Caco-2 (cell line): ENCODE measurements at regions of chr22 and their contacts with region 1.

Region 1: GRCh38 chr22:38923463-38924346 is 33.7 kb upstream of the APOBEC3A start:
- DNase-seq: peak; percentile 92 to 95
- H3K4me3 ChIP-seq: peak overlapping the region; percentile 3
- H3K4me3 Mint-ChIP-seq: peak overlapping the region; percentile 66
- H3K27ac Mint-ChIP-seq: peak overlapping the region; percentile 76
- H3K4me1 ChIP-seq: peaks cover 55% of the 10 kb centered on the region
- H3K4me1 Mint-ChIP-seq: peaks cover 13% of the 10 kb centered on the region
- H3K27me3 ChIP-seq: no peaks in the 10 kb centered on the region
- H3K27me3 Mint-ChIP-seq: no peaks in the 10 kb centered on the region
- CTCF ChIP-seq: peak; percentile 27 to 29

Region 2: DNA sequence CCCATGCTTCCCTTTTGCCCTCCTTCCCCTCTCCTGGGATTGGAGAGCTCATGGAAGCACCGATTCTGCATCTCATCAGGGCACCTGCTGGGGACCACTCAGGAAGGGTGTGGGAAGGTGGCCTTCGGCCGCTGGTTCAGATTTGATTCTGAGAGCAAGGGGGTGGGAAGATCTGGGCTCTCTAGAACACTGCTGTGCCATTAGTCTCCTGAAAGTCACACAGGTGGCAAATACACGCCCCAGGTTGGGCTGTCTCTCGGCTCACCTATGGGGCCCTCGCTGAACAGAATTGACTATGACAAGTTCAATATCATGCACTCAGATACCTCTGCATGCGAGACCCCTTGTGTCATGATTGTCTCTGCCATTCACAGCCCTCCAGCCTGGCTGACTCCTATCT is 20.9 kb after region 1 on chr22:
- CTCF ChIA-PET with region 1: no interaction called
- POLR2A ChIA-PET with region 1: no interaction called
- intact Hi-C with region 1: loop called (anchors 1 kb)
- DNase-seq: no peak
- H3K4me3 ChIP-seq: no peak overlapping the region
- H3K4me3 Mint-ChIP-seq: no peak overlapping the region
- H3K27ac Mint-ChIP-seq: no peak overlapping the region
- H3K4me1 ChIP-seq: peaks cover 4% of the 10 kb centered on the region; the same call in 1 of the 2 replicates
- H3K4me1 Mint-ChIP-seq: peaks cover 8% of the 10 kb centered on the region
- H3K27me3 ChIP-seq: no peaks in the 10 kb centered on the region
- H3K27me3 Mint-ChIP-seq: no peaks in the 10 kb centered on the region
- CTCF ChIP-seq: no peak

Region 3: GRCh38 chr22:38963872-38964271 is 40.2 kb after region 1 on chr22:
- CTCF ChIA-PET with region 1: interaction called, 4 read pairs
- POLR2A ChIA-PET with region 1: no interaction called
- intact Hi-C with region 1: loop called (anchors 2 kb)
- DNase-seq: peak; percentile 83 to 85
- H3K4me3 ChIP-seq: no peak overlapping the region
- H3K4me3 Mint-ChIP-seq: peak overlapping the region; percentile 34
- H3K27ac Mint-ChIP-seq: peak overlapping the region; percentile 42
- H3K4me1 ChIP-seq: peaks cover 19% of the 10 kb centered on the region
- H3K4me1 Mint-ChIP-seq: peaks cover 13% of the 10 kb centered on the region
- H3K27me3 ChIP-seq: no peaks in the 10 kb centered on the region
- H3K27me3 Mint-ChIP-seq: no peaks in the 10 kb centered on the region
- CTCF ChIP-seq: no peak

Region 4: GRCh38 chr22:38981992-38982927 is 58.6 kb after region 1 on chr22 and contains the start of gene APOBEC3B:
- CTCF ChIA-PET with region 1: interaction called, 6 read pairs
- POLR2A ChIA-PET with region 1: interaction called, 14 read pairs
- intact Hi-C with region 1: loop called (anchors 1 kb)
- DNase-seq: peak; percentile 91 to 94
- H3K4me3 ChIP-seq: peak within 1 kb of the TSS; percentile 44
- H3K4me3 Mint-ChIP-seq: peak within 1 kb of the TSS; percentile 80
- H3K27ac Mint-ChIP-seq: peak within 1 kb of the TSS; percentile 91
- H3K4me1 ChIP-seq: peaks cover 19% of the 10 kb centered on the region
- H3K4me1 Mint-ChIP-seq: peaks cover 19% of the 10 kb centered on the region
- H3K27me3 ChIP-seq: no peaks in the 10 kb centered on the region
- H3K27me3 Mint-ChIP-seq: no peaks in the 10 kb centered on the region
- CTCF ChIP-seq: no peak
- total RNA-seq, gene APOBEC3B: 55.8 and 60.9 TPM in 2 replicates